CD8-positive, alpha-beta T cell (primary cell): ENCODE measurements at regions of chr5 and their contacts with region 1.

Region 1: GRCh38 chr5:159456261-159456660 is 126.0 kb upstream of the IL12B start:
- DNase-seq: peak in 1 of 9 experiments; percentile 7
- ATAC-seq: no peak
- H3K4me3 ChIP-seq: no peak overlapping the region
- H3K4me3 Mint-ChIP-seq: no peak overlapping the region
- H3K27ac ChIP-seq: no peak overlapping the region
- H3K27ac Mint-ChIP-seq: no peak overlapping the region
- H3K4me1 ChIP-seq: no peaks in the 10 kb centered on the region
- H3K4me1 Mint-ChIP-seq: peaks cover 2% of the 10 kb centered on the region
- H3K27me3 ChIP-seq: no peaks in the 10 kb centered on the region
- H3K27me3 Mint-ChIP-seq: peaks cover 11% of the 10 kb centered on the region
- CTCF ChIP-seq: no peak

Region 2: GRCh38 chr5:159444441-159445082 is 11.7 kb before region 1 on chr5:
- CTCF ChIA-PET with region 1: interaction called, 11 read pairs
- POLR2A ChIA-PET with region 1: interaction called, 3 read pairs
- intact Hi-C with region 1: no loop called
- DNase-seq: peak in 2 of 9 experiments; percentile 30 to 64
- ATAC-seq: no peak
- H3K4me3 ChIP-seq: no peak overlapping the region
- H3K4me3 Mint-ChIP-seq: no peak overlapping the region
- H3K27ac ChIP-seq: no peak overlapping the region
- H3K27ac Mint-ChIP-seq: no peak overlapping the region
- H3K4me1 ChIP-seq: no peaks in the 10 kb centered on the region
- H3K4me1 Mint-ChIP-seq: no peaks in the 10 kb centered on the region
- H3K27me3 ChIP-seq: no peaks in the 10 kb centered on the region
- H3K27me3 Mint-ChIP-seq: no peaks in the 10 kb centered on the region
- CTCF ChIP-seq: no peak